Activated CD4-positive, alpha-beta memory T cell treated with anti-CD3 and anti-CD28 coated beads for 36 hours (primary cell): ENCODE measurements at regions of chr3 and their contacts with region 1.

Region 1: GRCh38 chr3:39051647-39052561 is at the starts of genes SCN11A and WDR48:
- DNase-seq: peak; percentile 96
- H3K4me3 Mint-ChIP-seq: peak within 1 kb of the TSS; percentile 92
- H3K27ac Mint-ChIP-seq: peak within 1 kb of the TSS; percentile 96
- H3K4me1 Mint-ChIP-seq: peaks cover 64% of the 10 kb centered on the region
- H3K27me3 Mint-ChIP-seq: no peaks in the 10 kb centered on the region
- total RNA-seq, gene SCN11A: 0.02 to 0.05 TPM
- total RNA-seq, gene WDR48: 38.5 to 43.8 TPM

Region 2: DNA sequence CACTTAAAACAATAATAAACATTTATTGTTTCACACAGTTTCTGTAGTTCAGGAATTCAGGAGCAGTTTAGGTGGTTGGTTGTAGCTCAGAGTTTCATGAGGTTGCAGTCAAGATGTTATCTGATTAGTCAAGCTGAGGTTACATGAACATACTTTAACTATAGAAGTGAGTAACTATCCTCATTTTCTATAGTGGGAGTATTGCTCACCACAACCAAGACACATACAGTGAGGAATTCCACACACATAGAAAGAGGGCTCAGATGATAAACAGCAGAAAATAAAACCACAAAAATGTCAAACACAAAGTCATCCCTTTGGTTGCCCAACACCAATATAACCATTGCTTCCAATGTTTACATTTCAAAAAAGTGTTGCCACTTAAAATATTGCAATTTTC is 13.7 kb before region 1 on chr3:
- CTCF ChIA-PET with region 1: interaction called, 3 read pairs
- POLR2A ChIA-PET with region 1: no interaction called
- intact Hi-C with region 1: loop called (anchors 1 kb)
- DNase-seq: no peak
- H3K4me3 Mint-ChIP-seq: no peak overlapping the region
- H3K27ac Mint-ChIP-seq: no peak overlapping the region
- H3K4me1 Mint-ChIP-seq: peaks cover 8% of the 10 kb centered on the region
- H3K27me3 Mint-ChIP-seq: peaks cover 2% of the 10 kb centered on the region

Region 3: GRCh38 chr3:39107388-39108199 is 55.7 kb after region 1 on chr3 and contains the starts of genes GORASP1 and TTC21A:
- CTCF ChIA-PET with region 1: no interaction called
- POLR2A ChIA-PET with region 1: interaction called, 3 read pairs
- intact Hi-C with region 1: loop called (anchors 2 kb)
- DNase-seq: peak; percentile 83
- H3K4me3 Mint-ChIP-seq: peak within 1 kb of the TSS; percentile 81
- H3K27ac Mint-ChIP-seq: peak within 1 kb of the TSS; percentile 74
- H3K4me1 Mint-ChIP-seq: peaks cover 42% of the 10 kb centered on the region
- H3K27me3 Mint-ChIP-seq: no peaks in the 10 kb centered on the region
- total RNA-seq, gene GORASP1: 32.7 to 34.1 TPM
- total RNA-seq, gene TTC21A: 1.7 to 1.8 TPM

Region 4: GRCh38 chr3:39146984-39147591 is 95.2 kb after region 1 on chr3:
- CTCF ChIA-PET with region 1: no interaction called
- POLR2A ChIA-PET with region 1: no interaction called
- intact Hi-C with region 1: loop called (anchors 2 kb)
- DNase-seq: peak; percentile 90
- H3K4me3 Mint-ChIP-seq: peak overlapping the region; percentile 92
- H3K27ac Mint-ChIP-seq: peak overlapping the region; percentile 97
- H3K4me1 Mint-ChIP-seq: peaks cover 70% of the 10 kb centered on the region
- H3K27me3 Mint-ChIP-seq: no peaks in the 10 kb centered on the region

Region 5: GRCh38 chr3:39383045-39383880 is 331.4 kb after region 1 on chr3 and contains the start of gene SLC25A38:
- CTCF ChIA-PET with region 1: no interaction called
- POLR2A ChIA-PET with region 1: no interaction called
- intact Hi-C with region 1: loop called (anchors 2 kb)
- DNase-seq: peak; percentile 89
- H3K4me3 Mint-ChIP-seq: peak within 1 kb of the TSS; percentile 93
- H3K27ac Mint-ChIP-seq: peak within 1 kb of the TSS; percentile 97
- H3K4me1 Mint-ChIP-seq: peaks cover 36% of the 10 kb centered on the region
- H3K27me3 Mint-ChIP-seq: no peaks in the 10 kb centered on the region
- total RNA-seq, gene SLC25A38: 23.1 to 24.9 TPM

Region 6: GRCh38 chr3:39855517-39855916 is 803.6 kb after region 1 on chr3:
- CTCF ChIA-PET with region 1: no interaction called
- POLR2A ChIA-PET with region 1: no interaction called
- intact Hi-C with region 1: no loop called
- DNase-seq: no peak
- H3K4me3 Mint-ChIP-seq: no peak overlapping the region
- H3K27ac Mint-ChIP-seq: no peak overlapping the region
- H3K4me1 Mint-ChIP-seq: no peaks in the 10 kb centered on the region
- H3K27me3 Mint-ChIP-seq: peaks cover 1% of the 10 kb centered on the region

Region 7: DNA sequence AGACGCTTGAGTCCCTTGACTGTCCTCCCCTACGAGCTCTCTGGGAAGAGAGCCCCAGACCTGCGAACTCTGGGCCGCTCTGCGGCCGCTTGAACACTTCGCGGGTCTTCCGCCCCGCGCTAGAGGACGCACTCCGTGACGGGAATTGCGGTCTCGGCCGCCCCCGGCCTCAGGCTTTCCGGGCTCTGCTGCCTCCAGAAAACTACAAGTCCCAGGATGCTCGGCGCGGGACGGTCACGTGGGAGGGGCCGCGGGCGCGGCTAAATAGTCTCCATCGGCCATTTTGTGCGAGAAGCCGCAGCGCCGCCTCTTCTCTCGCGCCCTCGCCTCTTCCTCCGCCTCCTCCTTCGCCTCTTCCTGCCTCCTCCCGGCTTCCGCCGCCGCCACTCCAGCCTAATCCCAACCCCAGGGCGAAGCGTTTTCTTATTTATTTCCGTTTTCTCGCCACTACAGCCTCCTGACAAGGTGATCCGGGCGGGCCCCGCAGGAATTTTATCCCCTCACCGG is 1257.6 kb after region 1 on chr3 and contains the start of gene EIF1B:
- CTCF ChIA-PET with region 1: no interaction called
- POLR2A ChIA-PET with region 1: no interaction called
- intact Hi-C with region 1: loop called (anchors 5 kb)
- DNase-seq: peak; percentile 99
- H3K4me3 Mint-ChIP-seq: peak within 1 kb of the TSS; percentile 96
- H3K27ac Mint-ChIP-seq: peak within 1 kb of the TSS; percentile 97
- H3K4me1 Mint-ChIP-seq: peaks cover 23% of the 10 kb centered on the region
- H3K27me3 Mint-ChIP-seq: no peaks in the 10 kb centered on the region
- total RNA-seq, gene EIF1B: 48.6 to 51.0 TPM